Activated naive CD4-positive, alpha-beta T cell treated with anti-CD3 and anti-CD28 coated beads for 36 hours (primary cell): ENCODE measurements at regions of chr15 and their contacts with region 1.

Region 1: GRCh38 chr15:40405501-40406381 is at the start of gene IVD:
- DNase-seq: peak; percentile 94
- H3K4me3 Mint-ChIP-seq: peak within 1 kb of the TSS; percentile 83
- H3K27ac Mint-ChIP-seq: peak within 1 kb of the TSS; percentile 71
- H3K4me1 Mint-ChIP-seq: peaks cover 56% of the 10 kb centered on the region
- H3K27me3 Mint-ChIP-seq: no peaks in the 10 kb centered on the region
- total RNA-seq, gene IVD: 33.1 to 34.1 TPM

Region 2: DNA sequence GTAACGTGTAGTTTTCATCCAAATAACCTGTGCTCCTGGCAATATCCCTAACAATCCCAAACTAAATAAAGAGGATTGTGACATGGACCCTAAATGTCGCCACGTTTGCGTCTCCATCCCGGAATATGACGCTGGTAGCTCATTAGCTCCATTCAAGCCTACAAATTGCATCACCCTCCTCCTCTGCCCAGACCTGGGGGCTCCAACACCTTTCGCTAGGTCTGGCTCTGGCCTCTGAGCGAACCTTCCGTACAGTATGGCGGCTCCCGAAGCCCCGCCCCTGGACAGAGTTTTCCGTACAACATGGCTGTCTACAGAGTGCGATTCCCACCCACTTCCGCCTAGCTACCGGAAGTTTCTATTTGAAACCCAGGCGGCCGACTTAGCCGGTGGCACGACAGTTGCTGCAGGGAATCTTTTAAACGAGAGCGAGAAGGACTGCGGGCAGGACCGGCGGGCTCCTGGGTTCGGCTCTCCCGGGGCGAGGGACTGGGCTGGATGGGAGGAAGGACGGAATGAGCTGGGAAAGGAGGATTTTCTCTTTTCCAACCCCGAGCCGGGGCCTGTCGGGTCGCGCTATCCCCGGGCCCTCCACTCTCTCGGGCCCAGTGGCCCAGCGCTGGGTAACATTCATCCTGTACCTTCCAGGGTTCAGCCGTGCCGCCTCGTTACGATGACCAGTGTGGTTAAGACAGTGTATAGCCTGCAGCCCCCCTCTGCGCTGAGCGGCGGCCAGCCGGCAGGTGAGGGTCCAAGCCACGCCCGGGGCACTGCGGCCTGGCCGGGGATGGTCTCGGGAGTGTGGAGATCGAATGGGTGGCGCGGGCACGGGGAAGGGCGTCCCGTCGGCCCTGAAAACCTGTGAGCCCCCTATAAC is 22.9 kb before region 1 on chr15 and contains the start of gene KNSTRN:
- CTCF ChIA-PET with region 1: no interaction called
- intact Hi-C with region 1: loop called (anchors 1 kb)
- DNase-seq: peak; percentile 97
- H3K4me3 Mint-ChIP-seq: peak within 1 kb of the TSS; percentile 94
- H3K27ac Mint-ChIP-seq: peak within 1 kb of the TSS; percentile 72
- H3K4me1 Mint-ChIP-seq: peaks cover 18% of the 10 kb centered on the region
- H3K27me3 Mint-ChIP-seq: no peaks in the 10 kb centered on the region
- total RNA-seq, gene KNSTRN: 60.7 to 62.1 TPM

Region 3: DNA sequence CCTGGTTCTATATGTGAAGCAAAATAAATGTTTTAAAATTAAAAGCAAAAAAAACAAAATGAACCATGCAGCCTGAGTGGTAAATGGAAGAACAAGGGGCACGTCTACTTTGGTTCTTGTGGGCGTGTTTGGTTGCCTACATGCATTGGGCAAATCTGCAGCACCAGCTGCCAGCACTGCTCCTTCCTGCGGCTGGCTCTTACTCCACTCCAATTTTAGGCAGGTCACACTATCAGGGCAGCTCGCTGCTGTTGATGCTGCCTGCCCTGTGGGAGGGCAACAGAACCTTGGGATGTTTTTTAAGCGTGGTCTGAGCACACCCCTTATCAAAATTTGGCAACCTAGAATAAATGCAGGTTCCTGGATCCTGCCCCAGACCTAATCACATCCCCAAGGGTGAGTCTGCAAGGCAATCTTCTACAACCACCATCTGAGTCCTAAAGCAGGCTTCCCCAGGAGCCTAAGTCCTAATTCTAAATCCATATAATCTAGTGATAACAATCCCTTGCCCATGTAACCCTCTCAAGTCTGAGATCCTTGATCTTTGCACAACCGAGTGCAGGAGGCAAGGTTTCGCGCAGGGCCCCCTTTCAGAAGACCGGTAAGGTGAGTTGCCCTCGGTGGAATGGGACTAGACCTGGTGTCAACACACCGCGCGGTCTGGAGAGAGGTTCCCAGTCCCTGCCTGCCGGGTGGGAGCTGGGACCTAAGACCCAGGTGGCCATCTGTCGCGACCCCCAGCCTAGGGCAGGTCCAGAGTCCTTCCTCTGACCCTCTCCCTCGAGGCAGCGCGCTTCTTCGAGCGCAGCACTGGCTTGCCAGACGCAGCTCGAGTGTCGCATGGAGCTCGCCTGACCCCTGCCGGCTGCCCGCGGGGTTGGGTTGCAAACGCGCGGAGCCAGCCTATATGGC is 15.8 kb after region 1 on chr15:
- CTCF ChIA-PET with region 1: interaction called, 13 read pairs
- intact Hi-C with region 1: no loop called
- DNase-seq: peak; percentile 90
- H3K4me3 Mint-ChIP-seq: no peak overlapping the region
- H3K27ac Mint-ChIP-seq: no peak overlapping the region
- H3K4me1 Mint-ChIP-seq: no peaks in the 10 kb centered on the region
- H3K27me3 Mint-ChIP-seq: no peaks in the 10 kb centered on the region

Region 4: DNA sequence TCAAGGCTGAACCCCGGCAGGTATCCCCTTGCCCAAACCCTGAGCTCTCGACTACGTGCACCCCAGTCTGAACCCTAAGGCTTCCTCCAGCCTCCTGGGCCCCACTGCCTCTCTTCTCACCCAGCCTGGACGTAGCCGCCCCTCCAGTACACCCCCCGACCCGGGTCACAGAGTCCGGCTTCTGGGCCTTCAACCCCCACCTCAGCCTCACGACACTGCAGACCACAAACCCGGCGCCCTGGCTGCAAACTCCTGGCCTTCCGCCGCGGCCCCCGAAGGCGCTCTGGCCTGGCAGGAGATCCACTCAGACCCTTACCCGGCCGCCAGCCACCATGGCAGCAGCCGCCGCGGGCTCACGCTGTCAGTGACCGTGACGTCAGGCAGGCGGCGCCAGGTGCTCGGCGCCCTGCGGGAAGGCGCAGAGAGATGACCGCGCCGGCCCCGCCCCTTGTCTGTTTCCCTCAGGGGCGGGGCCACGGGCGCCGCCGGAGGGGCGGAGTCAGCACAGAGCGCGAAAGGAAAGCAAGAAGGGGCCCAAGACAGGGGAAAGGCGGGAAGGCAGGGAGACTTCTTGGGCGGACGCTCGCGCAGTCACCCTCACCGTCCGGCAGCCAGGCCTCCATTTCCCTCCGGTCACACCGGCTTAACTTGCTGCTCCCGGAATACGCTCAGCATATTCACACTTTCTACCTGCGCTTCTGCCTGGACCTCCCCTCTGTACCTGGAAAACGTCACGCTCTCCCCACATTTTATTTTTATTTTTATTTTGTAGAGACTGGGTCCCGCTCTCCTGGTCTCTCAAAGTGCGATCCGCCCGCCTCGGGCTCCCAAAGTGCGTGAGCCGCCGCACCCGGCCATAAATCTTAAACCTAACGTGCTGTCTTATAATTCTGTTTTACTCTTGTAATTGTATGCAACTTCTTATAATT is 349.4 kb after region 1 on chr15 and contains the start of gene RMDN3:
- CTCF ChIA-PET with region 1: no interaction called
- intact Hi-C with region 1: loop called (anchors 1 kb)
- DNase-seq: peak; percentile 95
- H3K4me3 Mint-ChIP-seq: peak within 1 kb of the TSS; percentile 94
- H3K27ac Mint-ChIP-seq: peak within 1 kb of the TSS; percentile 98
- H3K4me1 Mint-ChIP-seq: peaks cover 25% of the 10 kb centered on the region
- H3K27me3 Mint-ChIP-seq: no peaks in the 10 kb centered on the region
- total RNA-seq, gene RMDN3: 17.8 to 19.2 TPM